Right ventricle myocardium superior (tissue), 1 donor: ENCODE measurements at regions of chr21 and their contacts with region 1.

Region 1: GRCh38 chr21:41879190-41879998 is at the start of gene PRDM15:
- DNase-seq: peak; percentile 89
- ATAC-seq: peak; percentile 67
- total RNA-seq, gene PRDM15: 3.8 TPM

Region 2: DNA sequence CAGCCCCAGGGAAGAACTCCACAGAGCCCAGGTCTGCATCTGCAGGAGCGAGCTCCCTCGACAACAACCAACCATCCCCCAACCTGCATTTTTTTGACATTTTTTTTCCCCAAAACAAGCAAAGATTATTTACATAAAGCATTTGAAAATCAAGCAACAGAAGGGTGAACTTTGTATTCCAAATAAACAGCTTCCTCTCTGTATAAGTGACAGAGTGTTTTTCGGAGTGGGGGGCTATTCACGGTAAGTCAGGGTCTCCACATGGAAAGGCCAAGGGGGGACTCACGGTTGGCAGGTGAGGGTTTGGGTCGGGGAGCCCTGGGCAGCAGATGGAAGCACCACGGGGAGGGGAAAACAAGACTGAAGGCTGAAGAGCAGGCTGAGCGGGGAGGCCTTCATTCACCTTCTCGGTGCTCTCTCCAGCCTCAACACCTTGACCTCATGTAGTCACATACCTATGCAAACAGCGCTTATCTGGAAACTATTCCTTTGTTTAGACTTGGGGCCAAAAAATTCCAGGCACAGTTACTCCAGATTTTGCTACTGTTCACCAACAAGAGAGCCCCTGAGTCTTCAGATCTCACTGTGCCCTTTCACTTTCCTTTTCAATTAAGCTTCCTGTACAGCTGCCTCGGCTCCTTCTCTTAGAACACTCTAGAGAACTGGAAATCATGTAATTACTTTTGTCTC is 46.9 kb after region 1 on chr21:
- intact Hi-C with region 1: loop called (anchors 10 kb)
- DNase-seq: no peak
- ATAC-seq: peak; percentile 70

Region 3: GRCh38 chr21:42080788-42081083 is 201.3 kb after region 1 on chr21:
- intact Hi-C with region 1: no loop called
- DNase-seq: no peak
- ATAC-seq: peak; percentile 38

Region 4: DNA sequence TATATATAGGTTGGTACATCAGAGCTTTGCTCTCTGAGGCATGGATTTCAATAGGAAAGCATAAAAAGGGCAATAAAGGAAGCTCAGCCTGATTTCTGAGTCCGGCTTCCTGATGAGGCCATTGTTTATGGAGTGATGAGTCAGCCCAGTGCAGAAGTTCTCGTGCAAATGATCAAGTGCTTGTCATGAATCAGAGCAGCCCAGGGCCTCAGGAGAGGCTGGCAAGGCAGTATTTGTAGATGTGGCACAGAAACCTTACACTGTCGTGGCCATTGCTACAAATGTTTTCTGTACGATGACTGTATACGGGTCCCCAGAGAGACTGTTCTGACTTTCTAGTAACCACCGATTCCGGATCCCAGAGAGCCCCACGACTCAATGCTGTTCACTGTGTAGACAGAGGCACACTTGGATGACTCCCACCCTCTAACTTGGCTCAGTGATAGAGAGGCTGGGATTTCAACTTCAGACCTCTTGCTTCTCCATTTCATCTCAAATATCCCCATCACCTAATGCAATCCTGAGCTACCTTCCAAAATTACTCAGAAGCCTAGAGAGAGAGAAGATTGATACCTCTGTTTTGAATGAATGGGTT is 218.6 kb after region 1 on chr21:
- intact Hi-C with region 1: loop called (anchors 10 kb)
- DNase-seq: no peak
- ATAC-seq: peak; percentile 57

Region 5: GRCh38 chr21:42107881-42108553 is 228.6 kb after region 1 on chr21:
- intact Hi-C with region 1: no loop called
- DNase-seq: peak; percentile 76
- ATAC-seq: peak; percentile 95